ENCODE measurements at regions of chr1 and their contacts with region 1.

Region 1: GRCh38 chr1:157992031-157992832 is 1.2 kb upstream of the KIRREL1 start:
- DNase-seq: no peak

Region 2: GRCh38 chr1:157862114-157863070 is 129.8 kb before region 1 on chr1:
- intact Hi-C with region 1: no loop called
- DNase-seq: no peak

Region 3: DNA sequence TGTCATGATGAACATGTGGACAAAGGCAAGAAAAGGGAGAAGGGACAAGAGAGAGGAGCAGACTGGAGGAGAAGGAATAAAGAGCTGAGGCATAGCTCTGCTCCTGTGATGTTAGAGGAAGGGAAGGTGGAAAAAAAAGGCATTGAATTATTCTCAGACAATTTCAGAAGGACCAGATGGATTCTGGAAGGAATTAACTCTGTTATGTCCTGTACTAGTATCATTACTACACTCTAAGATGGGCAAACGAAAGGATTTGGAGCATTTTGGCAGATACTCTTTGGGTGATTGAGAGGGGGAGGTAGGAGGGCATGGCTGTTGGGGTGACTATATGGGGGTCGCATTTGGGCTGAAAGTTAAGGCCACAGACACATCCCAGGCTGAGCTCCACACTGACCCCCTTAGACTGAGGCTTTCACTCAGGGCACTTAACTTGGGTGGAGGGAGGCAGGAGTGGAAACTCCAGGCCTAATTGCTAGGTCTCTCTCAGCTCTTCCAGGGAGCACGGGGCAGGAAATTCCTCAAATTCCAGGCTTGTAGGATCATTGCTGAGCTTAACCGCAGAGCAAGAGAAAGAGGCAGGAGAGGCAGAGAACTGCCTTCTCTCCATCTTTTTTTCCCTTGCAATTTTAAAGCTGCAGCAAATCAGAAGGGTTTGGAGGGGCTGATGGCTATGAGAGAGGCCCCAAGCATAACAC is 27.1 kb after region 1 on chr1:
- intact Hi-C with region 1: loop called (anchors 2 kb)
- DNase-seq: no peak

Region 4: GRCh38 chr1:158035976-158036583 is 43.8 kb after region 1 on chr1:
- intact Hi-C with region 1: loop called (anchors 1 kb)
- DNase-seq: no peak

Region 5: GRCh38 chr1:158067662-158068061 is 75.4 kb after region 1 on chr1:
- intact Hi-C with region 1: no loop called
- DNase-seq: no peak

Region 6: DNA sequence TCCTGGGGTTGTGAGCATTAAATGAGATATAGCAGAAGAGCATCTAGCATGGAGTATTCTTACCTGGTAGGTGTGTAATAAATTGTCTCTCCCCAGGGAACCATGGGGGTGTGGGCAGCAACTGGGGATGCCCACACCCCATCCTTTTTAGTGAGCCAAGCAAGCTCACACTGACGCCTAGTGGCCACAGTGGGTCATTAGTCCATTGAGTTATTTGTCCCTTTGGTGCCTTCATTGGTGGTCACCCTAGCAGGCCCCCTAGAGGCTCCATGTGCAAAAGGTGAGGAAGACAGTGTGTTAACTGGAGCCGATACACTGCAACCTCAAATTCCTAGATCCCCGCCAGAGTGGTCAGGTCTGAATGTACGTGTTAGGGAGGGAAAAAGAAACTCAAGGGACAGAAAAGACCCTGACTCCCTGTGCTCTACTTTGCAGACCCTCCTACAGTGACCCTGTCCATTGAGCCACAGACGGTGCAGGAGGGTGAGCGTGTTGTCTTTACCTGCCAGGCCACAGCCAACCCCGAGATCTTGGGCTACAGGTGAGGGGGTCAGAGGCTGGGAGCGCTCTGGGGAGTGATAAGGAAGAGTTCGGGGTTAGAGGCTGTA is 95.2 kb after region 1 on chr1:
- intact Hi-C with region 1: loop called (anchors 2 kb)
- DNase-seq: no peak

Region 7: DNA sequence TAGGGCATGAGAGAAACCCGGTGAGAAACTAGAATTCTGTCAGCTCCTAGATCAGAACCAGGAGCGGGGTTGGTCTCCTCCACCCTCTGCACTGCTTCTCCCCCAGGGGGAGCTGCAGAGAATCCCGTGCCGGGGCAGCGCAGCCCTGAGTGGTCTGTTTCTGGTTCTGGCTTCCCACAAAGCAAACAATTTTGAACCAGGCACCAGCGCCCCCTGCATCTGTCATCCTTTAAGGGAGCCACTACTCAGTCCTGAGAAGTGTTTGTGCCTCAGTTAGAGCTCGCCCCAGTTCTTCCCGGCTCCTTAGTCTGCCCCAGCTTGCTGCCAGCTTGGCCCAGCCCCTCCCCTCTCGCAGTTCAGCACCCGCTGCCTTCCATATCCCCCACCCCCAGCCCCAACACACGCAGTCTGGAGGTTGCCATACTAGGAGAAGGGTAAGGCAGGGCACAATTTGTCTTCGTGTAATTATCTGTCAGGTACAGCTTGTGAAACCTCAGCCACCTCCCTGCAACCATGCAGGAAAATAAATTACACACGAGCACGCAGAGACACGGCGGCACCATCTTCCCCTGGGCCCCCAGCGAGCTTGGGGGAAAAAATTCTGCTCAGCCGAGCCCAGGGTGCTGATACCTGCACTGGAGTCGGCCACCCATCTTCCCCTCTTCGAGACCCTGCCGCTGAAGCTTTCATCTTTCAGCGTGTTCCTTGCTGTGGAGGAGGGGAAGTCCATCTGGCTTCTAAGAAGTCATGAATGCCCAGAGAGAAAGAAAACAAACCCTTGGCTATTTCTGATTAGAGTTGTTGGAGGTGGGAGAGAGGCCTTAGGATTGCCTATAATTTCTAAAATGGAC is 125.8 kb after region 1 on chr1:
- intact Hi-C with region 1: loop called (anchors 10 kb)
- DNase-seq: no peak